ENCODE measurements at regions of chrX and their contacts with region 1.

Region 1: GRCh38 chrX:9885150-9885549 is 82.0 kb upstream of the CLDN34 start:
- DNase-seq: peak; percentile 71
- ATAC-seq: peak; percentile 80
- H3K4me3 ChIP-seq: no peak overlapping the region
- H3K27ac ChIP-seq: no peak overlapping the region
- H3K4me1 ChIP-seq: peaks cover 8% of the 10 kb centered on the region
- H3K27me3 ChIP-seq: no peaks in the 10 kb centered on the region
- CTCF ChIP-seq: peak; percentile 73
- POLR2A ChIP-seq: peak; percentile 28; the same call in 1 of the 2 replicates
- RAD21 ChIP-seq: peak; percentile 78

Region 2: GRCh38 chrX:9995855-9996339 is 110.7 kb after region 1 on chrX:
- CTCF ChIA-PET with region 1: interaction called, 3 read pairs
- POLR2A ChIA-PET with region 1: no interaction called
- dilution Hi-C with region 1: no loop called
- in situ Hi-C with region 1: loop called (anchors 10 kb)
- intact Hi-C with region 1: loop called (anchors 2 kb)
- DNase-seq: peak; percentile 79
- ATAC-seq: peak; percentile 94
- H3K4me3 ChIP-seq: no peak overlapping the region
- H3K27ac ChIP-seq: no peak overlapping the region
- H3K4me1 ChIP-seq: no peaks in the 10 kb centered on the region
- H3K27me3 ChIP-seq: no peaks in the 10 kb centered on the region
- CTCF ChIP-seq: peak; percentile 98
- POLR2A ChIP-seq: no peak
- RAD21 ChIP-seq: peak; percentile 88

Region 3: DNA sequence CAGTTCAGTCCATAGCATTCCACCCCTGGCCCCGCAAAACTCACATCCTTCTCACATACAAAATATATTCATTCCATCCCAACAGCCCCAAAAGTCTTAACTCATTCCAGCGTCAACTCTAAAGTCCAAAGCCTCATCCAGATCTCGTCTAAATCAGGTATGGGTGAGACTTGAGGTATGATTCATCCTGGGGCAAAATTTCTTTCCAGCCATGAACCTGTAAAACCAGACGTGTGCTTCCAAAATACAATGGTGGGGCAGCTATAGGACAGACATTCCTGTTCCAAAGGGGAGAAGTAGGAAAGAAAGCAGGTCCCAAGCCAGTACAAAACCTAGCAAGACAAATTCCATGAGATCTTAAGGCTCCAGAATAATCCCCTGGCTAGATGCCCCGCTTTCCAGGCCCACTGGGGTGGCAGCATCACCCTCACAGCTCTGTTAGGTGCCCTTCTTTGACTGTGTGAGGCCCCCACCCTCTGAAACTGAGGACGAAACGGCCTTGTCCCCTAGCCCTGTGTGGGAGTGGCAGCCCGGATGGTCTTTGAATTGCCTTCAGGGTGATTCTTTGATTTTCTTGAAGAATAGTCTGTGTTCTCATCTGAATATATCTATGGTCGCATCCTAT is 159.0 kb after region 1 on chrX:
- CTCF ChIA-PET with region 1: no interaction called
- POLR2A ChIA-PET with region 1: interaction called, 20 read pairs
- dilution Hi-C with region 1: no loop called
- in situ Hi-C with region 1: no loop called
- intact Hi-C with region 1: no loop called
- DNase-seq: no peak
- ATAC-seq: no peak
- H3K4me3 ChIP-seq: no peak overlapping the region
- H3K27ac ChIP-seq: no peak overlapping the region
- H3K4me1 ChIP-seq: peaks cover 13% of the 10 kb centered on the region
- H3K27me3 ChIP-seq: no peaks in the 10 kb centered on the region
- CTCF ChIP-seq: no peak
- POLR2A ChIP-seq: no peak
- RAD21 ChIP-seq: no peak

Measured in IMR-90 (cell line).